ENCODE measurements at regions of chrX and their contacts with region 1.

Region 1: DNA sequence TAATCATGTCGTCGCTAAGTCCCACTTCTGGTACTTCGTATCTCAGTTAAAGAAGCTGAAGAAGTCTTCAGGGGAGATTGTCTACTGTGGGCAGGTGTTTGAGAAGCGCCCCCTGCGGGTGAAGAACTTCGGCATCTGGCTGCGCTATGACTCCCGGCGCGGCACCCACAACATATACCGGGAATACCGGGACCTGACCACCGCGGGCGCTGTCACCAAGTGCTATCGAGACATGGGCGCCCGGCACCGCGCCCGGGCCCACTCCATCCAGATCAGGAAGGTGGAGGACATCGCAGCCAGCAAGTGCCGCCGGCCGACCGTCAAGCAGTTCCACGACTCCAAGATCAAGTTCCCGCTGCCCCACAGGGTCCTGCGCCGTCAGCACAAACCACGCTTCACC is 11.3 kb downstream of the PNCK start:
- DNase-seq: peak; percentile 38
- H3K4me3 Mint-ChIP-seq: no peak overlapping the region
- H3K27ac Mint-ChIP-seq: no peak overlapping the region
- H3K4me1 Mint-ChIP-seq: no peaks in the 10 kb centered on the region
- H3K27me3 Mint-ChIP-seq: peaks cover 11% of the 10 kb centered on the region
- CTCF ChIP-seq: peak; percentile 41

Region 2: GRCh38 chrX:152941328-152942106 is 720.7 kb before region 1 on chrX:
- CTCF ChIA-PET with region 1: no interaction called
- POLR2A ChIA-PET with region 1: no interaction called
- intact Hi-C with region 1: loop called (anchors 5 kb)
- DNase-seq: peak; percentile 89
- H3K4me3 Mint-ChIP-seq: peak overlapping the region; percentile 82
- H3K27ac Mint-ChIP-seq: peak overlapping the region; percentile 77
- H3K4me1 Mint-ChIP-seq: no peaks in the 10 kb centered on the region
- H3K27me3 Mint-ChIP-seq: no peaks in the 10 kb centered on the region
- CTCF ChIP-seq: peak; percentile 75

Region 3: DNA sequence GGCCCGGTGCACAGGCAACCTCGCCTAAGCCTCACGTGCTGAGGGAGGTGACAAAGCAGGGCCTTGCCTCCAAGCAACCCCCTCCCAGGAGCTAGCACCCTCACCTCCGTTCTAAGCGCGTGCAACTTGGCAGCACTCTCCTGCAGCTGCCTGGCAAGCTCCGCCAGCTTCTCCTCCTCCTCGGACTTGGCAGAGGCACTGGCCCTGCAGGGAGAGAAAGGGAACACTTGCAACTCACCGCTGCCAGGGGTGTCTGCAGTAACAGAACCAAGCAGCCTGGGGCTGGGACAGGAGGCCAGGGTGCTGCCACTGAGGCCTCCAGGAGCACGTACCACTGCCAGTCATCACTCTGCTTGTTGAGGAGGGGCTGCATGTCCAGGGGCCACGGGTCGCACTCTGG is 206.1 kb before region 1 on chrX:
- CTCF ChIA-PET with region 1: no interaction called
- POLR2A ChIA-PET with region 1: no interaction called
- intact Hi-C with region 1: no loop called
- DNase-seq: no peak
- H3K4me3 Mint-ChIP-seq: no peak overlapping the region
- H3K27ac Mint-ChIP-seq: no peak overlapping the region
- H3K4me1 Mint-ChIP-seq: no peaks in the 10 kb centered on the region
- H3K27me3 Mint-ChIP-seq: no peaks in the 10 kb centered on the region
- CTCF ChIP-seq: no peak

Measured in MCF 10A (cell line).